ENCODE measurements at regions of chr18 and their contacts with region 1.

Region 1: GRCh38 chr18:60413944-60414547 is 41.5 kb upstream of the MC4R start:
- DNase-seq: no peak
- CTCF ChIP-seq: peak; percentile 51

Region 2: DNA sequence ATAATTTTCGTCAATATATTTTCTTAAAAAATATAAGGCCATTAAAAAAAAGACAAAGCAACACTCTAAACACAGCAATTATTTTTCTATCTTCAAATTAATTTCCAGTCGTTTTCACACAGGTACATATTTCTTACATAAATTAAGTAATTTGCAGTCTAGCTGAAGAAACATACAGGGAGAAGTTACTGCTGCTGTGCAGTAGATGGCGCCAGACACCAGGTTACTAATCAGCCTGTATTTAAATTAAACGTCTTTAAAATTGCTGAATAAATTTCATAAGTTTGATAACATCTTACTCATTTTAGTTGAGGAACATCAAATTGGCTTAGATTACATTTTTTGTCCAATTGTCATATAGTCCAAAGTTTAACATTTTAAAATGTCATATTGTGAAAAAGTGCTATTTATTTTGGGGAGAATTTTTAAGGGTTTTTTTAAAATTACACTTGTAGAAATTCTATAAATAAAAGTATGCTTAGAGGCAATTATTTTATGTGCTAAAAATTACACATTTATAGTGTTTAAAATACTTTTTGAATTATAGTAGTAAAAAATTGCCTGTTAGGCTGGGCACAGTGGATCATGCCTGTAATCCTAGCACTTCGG is 425.8 kb before region 1 on chr18:
- CTCF ChIA-PET with region 1: interaction called, 33 read pairs
- POLR2A ChIA-PET with region 1: no interaction called
- DNase-seq: peak; percentile 47
- CTCF ChIP-seq: peak; percentile 88

Region 3: DNA sequence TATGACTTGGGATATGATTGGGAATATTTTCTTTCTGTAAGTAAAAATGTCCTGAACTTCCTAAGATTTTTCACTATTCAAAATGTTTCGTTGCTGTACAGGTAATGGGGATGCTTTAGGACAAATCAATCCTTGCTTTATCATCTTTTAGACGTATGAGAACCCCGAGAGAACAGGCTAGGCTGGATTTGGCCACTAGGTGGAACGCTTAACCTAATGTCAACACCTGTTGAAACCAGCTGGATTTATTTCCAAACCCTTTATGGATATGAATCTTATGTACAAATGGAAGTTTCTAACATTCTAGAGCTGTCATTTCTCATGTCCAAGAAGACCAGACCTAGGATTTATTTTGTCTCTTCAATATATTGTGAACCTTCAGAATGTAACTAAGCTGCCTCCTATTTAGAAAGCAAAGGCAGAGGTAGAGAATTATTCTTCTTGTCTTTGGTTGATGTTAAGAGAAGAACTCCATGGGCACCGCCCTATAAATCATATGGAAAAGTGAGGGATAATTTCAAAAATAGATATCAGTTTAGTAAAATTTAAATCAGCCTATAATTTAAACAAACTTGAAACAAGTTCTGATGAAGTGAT is 417.6 kb before region 1 on chr18:
- CTCF ChIA-PET with region 1: interaction called, 33 read pairs
- POLR2A ChIA-PET with region 1: no interaction called
- DNase-seq: peak; percentile 30
- CTCF ChIP-seq: peak; percentile 67

Region 4: DNA sequence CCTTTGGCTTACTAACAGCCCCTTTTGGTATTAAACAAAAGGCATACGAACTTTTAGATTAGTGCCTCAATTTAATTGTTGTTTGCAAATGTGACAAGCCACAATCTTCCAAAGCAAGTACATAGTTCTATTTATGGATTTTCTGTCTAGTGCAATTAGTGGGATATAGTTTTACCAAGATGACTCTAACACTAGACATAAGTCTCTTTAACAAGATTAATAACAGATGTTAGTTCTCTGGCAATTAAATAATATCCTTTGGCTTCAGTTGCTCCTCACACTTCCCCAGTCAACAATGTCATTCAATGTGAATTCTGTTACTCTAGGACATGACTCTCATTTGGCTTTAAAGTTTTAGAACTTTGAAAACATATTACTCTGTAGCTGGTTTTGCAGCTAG is 24.7 kb before region 1 on chr18:
- CTCF ChIA-PET with region 1: no interaction called
- POLR2A ChIA-PET with region 1: no interaction called
- DNase-seq: no peak
- CTCF ChIP-seq: no peak

Region 5: DNA sequence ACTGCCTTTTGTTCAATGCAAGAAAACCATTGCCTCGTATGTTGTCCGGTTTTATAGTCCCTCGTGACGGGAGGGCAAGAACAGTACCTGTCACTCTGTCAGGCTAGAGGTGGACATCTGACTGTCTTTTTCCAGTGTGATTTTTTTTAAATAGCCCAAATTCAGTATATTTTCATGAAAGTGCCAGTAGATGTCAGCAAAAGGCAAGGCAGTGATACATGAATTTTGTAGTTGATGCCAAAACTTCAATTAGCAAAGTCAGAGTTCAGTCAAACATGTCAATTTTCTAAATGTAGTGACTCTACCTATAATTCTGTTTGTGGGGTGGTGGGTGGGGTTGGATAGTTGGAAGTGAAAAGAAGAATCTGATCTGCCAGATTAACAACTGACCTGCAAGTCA is 254.5 kb after region 1 on chr18:
- CTCF ChIA-PET with region 1: no interaction called
- POLR2A ChIA-PET with region 1: no interaction called
- DNase-seq: no peak
- CTCF ChIP-seq: peak; percentile 8